ENCODE measurements at regions of chr12 and their contacts with region 1.

Region 1: GRCh38 chr12:46209914-46210872 is 58.6 kb downstream of the SLC38A1 start:
- DNase-seq: peak; percentile 68
- ATAC-seq: peak; percentile 84
- H3K4me3 ChIP-seq: no peak overlapping the region
- H3K27ac ChIP-seq: peak overlapping the region; percentile 85
- H3K4me1 ChIP-seq: peaks cover 59% of the 10 kb centered on the region
- H3K27me3 ChIP-seq: no peaks in the 10 kb centered on the region
- CTCF ChIP-seq: no peak
- EP300 ChIP-seq: peak; percentile 83 to 86
- POLR2A ChIP-seq: peak; percentile 52; the same call in 1 of the 2 replicates
- RAD21 ChIP-seq: no peak

Region 2: GRCh38 chr12:46179683-46180452 is 30.3 kb before region 1 on chr12:
- CTCF ChIA-PET with region 1: interaction called, 33 read pairs
- POLR2A ChIA-PET with region 1: interaction called, 95 read pairs
- RAD21 ChIA-PET with region 1: interaction called, 126 read pairs
- SMC1A ChIA-PET with region 1: interaction called, 377 read pairs
- in situ Hi-C with region 1: no loop called
- intact Hi-C with region 1: loop called (anchors 1 kb)
- DNase-seq: peak; percentile 76
- ATAC-seq: peak; percentile 70
- H3K4me3 ChIP-seq: no peak overlapping the region
- H3K27ac ChIP-seq: peak overlapping the region; percentile 47
- H3K4me1 ChIP-seq: peaks cover 34% of the 10 kb centered on the region
- H3K27me3 ChIP-seq: no peaks in the 10 kb centered on the region
- CTCF ChIP-seq: no peak
- EP300 ChIP-seq: peak; percentile 78 to 85; a peak in 3 of 4 replicates
- POLR2A ChIP-seq: no peak
- RAD21 ChIP-seq: no peak

Region 3: DNA sequence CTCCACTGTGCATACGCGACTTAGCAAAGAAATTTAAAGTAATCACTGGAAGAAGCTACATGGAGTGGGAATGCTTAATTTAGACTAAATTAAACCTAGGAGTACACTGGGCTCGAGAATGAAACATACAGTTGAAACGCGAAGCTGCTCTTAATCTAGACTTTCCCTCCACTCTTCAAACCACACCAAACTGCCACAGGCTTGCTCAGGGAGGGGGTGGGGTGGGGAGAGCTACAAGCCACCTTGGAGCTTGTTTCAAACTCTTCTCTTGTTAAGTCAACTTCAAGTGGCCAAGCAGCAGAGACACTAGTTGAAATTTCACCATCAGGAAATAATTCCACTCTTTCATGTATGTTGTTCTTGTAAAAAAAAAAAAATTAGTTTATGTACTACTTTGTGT is 11.3 kb before region 1 on chr12:
- CTCF ChIA-PET with region 1: interaction called, 3 read pairs
- POLR2A ChIA-PET with region 1: interaction called, 4 read pairs
- RAD21 ChIA-PET with region 1: interaction called, 22 read pairs
- SMC1A ChIA-PET with region 1: interaction called, 117 read pairs
- in situ Hi-C with region 1: no loop called
- intact Hi-C with region 1: no loop called
- DNase-seq: no peak
- ATAC-seq: no peak
- H3K4me3 ChIP-seq: no peak overlapping the region
- H3K27ac ChIP-seq: no peak overlapping the region
- H3K4me1 ChIP-seq: no peaks in the 10 kb centered on the region
- H3K27me3 ChIP-seq: no peaks in the 10 kb centered on the region
- CTCF ChIP-seq: no peak
- EP300 ChIP-seq: no peak
- POLR2A ChIP-seq: no peak
- RAD21 ChIP-seq: no peak

Region 4: GRCh38 chr12:46263140-46264016 is 53.2 kb after region 1 on chr12:
- CTCF ChIA-PET with region 1: interaction called, 45 read pairs
- POLR2A ChIA-PET with region 1: interaction called, 22 read pairs
- RAD21 ChIA-PET with region 1: interaction called, 60 read pairs
- SMC1A ChIA-PET with region 1: interaction called, 95 read pairs
- in situ Hi-C with region 1: no loop called
- intact Hi-C with region 1: no loop called
- DNase-seq: no peak
- ATAC-seq: no peak
- H3K4me3 ChIP-seq: peak overlapping the region; percentile 11
- H3K27ac ChIP-seq: peak overlapping the region; percentile 35
- H3K4me1 ChIP-seq: peaks cover 12% of the 10 kb centered on the region; the same call in 1 of the 2 replicates
- H3K27me3 ChIP-seq: no peaks in the 10 kb centered on the region
- CTCF ChIP-seq: no peak
- EP300 ChIP-seq: no peak
- POLR2A ChIP-seq: no peak
- RAD21 ChIP-seq: no peak

Region 5: GRCh38 chr12:46372544-46373110 is 162.4 kb after region 1 on chr12 and contains the start of gene SLC38A2:
- CTCF ChIA-PET with region 1: no interaction called
- POLR2A ChIA-PET with region 1: no interaction called
- RAD21 ChIA-PET with region 1: interaction called, 3 read pairs
- SMC1A ChIA-PET with region 1: interaction called, 3 read pairs
- in situ Hi-C with region 1: no loop called
- intact Hi-C with region 1: loop called (anchors 5 kb)
- DNase-seq: no peak
- ATAC-seq: peak; percentile 90
- H3K4me3 ChIP-seq: peak within 1 kb of the TSS; percentile 84
- H3K27ac ChIP-seq: peak within 1 kb of the TSS; percentile 85
- H3K4me1 ChIP-seq: peaks cover 10% of the 10 kb centered on the region
- H3K27me3 ChIP-seq: no peaks in the 10 kb centered on the region
- CTCF ChIP-seq: no peak
- EP300 ChIP-seq: no peak
- POLR2A ChIP-seq: peak; percentile 99
- RAD21 ChIP-seq: no peak
- polyA plus RNA-seq, gene SLC38A2: 36.2 to 47.3 TPM

Region 6: DNA sequence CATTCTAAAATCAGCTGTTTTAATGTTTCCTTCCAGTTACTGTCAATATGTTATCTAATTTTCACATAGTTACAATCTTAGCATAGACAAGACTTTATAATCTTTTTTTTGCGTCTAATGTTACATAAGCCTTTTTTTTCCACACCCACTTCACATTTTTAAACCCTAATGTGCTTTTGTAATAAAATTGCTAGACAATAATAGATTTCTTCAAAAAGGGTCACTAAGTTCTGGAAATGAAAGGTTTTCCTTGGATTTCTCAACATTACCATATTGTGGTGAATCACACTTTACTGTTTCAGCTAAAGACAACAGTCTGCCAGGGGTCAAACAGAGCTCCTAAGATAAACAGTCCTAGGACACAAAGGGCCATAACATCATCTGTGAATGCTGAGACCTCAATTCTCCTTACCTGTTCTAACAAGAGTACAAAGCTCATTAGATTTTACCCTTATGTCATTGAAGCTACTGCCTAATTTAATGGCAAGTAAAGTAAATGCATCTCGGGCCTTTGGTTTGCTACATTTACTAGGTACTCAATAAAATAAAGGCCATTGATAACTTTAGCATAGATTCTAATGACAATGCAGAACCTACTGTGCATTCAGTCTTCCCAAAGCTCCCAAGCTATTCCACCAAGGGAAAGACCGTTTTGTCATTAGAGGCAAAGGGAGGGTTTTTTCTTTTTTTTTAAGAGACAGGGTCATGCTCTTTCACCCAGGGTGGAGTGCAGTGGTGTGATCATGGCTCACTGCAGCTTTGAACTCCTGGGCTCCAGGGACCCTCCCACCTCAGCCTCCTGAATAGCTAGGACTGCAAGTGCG is 273.6 kb after region 1 on chr12:
- CTCF ChIA-PET with region 1: no interaction called
- POLR2A ChIA-PET with region 1: no interaction called
- RAD21 ChIA-PET with region 1: no interaction called
- SMC1A ChIA-PET with region 1: no interaction called
- in situ Hi-C with region 1: no loop called
- intact Hi-C with region 1: no loop called
- DNase-seq: no peak
- ATAC-seq: no peak
- H3K4me3 ChIP-seq: no peak overlapping the region
- H3K27ac ChIP-seq: no peak overlapping the region
- H3K4me1 ChIP-seq: no peaks in the 10 kb centered on the region
- H3K27me3 ChIP-seq: no peaks in the 10 kb centered on the region
- CTCF ChIP-seq: no peak
- EP300 ChIP-seq: no peak
- POLR2A ChIP-seq: no peak
- RAD21 ChIP-seq: no peak

Region 7: GRCh38 chr12:47147739-47148138 is 937.5 kb after region 1 on chr12:
- CTCF ChIA-PET with region 1: no interaction called
- POLR2A ChIA-PET with region 1: no interaction called
- RAD21 ChIA-PET with region 1: no interaction called
- SMC1A ChIA-PET with region 1: no interaction called
- in situ Hi-C with region 1: no loop called
- intact Hi-C with region 1: no loop called
- DNase-seq: no peak
- ATAC-seq: no peak
- H3K4me3 ChIP-seq: no peak overlapping the region
- H3K27ac ChIP-seq: no peak overlapping the region
- H3K4me1 ChIP-seq: no peaks in the 10 kb centered on the region
- H3K27me3 ChIP-seq: no peaks in the 10 kb centered on the region; a peak in 1 of 4 replicates
- CTCF ChIP-seq: no peak
- EP300 ChIP-seq: no peak
- POLR2A ChIP-seq: no peak
- RAD21 ChIP-seq: no peak

Measured in GM12878 (cell line).